ENCODE measurements at regions of chr19 and their contacts with region 1.

Region 1: DNA sequence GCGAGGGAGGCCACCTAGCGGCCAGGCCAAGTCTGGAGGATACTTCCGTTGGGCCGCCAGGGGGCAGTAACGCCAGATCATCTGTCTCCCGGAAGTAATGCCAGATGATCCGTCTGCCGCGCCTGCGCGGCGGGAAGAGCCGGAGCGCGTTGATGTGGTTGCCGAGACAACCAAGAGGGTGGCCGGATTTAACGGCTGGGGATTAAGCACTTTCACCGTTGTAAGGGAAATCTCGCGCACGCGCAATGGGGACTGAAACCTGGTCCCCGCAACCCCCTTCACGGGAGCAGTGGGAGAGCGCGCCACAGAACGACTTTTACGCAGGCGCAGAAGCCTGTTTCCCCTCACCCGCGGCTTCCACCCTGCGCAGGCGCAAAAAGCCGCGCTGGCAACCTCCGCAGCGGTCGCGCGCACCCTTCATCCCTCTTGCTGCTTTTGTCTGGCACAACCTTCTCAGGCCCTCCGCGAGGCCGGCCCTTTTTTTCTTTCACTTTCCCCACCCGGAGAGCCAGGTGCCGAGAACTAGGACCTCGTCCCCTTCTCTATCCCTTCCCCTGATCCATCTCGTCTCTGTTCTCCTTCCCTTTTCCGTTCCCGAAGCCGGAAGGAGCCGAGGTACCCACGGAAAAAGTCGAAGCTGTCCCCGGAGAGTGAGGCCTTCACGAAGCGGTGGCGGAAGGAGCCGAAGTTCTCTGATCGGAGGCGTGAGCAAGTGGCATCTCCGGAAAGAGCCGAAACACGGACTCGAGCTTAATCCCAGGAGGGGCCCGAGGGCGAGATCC is 886 bp upstream of the U2AF2 start:
- DNase-seq: peak; percentile 100
- H3K4me3 Mint-ChIP-seq: peak overlapping the region; percentile 93
- H3K27ac Mint-ChIP-seq: peak overlapping the region; percentile 100
- H3K4me1 Mint-ChIP-seq: peaks cover 28% of the 10 kb centered on the region
- H3K27me3 Mint-ChIP-seq: no peaks in the 10 kb centered on the region

Region 2: GRCh38 chr19:54448774-54449700 is 1204.9 kb before region 1 on chr19 and contains the start of gene LENG8:
- CTCF ChIA-PET with region 1: no interaction called
- POLR2A ChIA-PET with region 1: no interaction called
- intact Hi-C with region 1: loop called (anchors 10 kb)
- DNase-seq: peak; percentile 98
- H3K4me3 Mint-ChIP-seq: peak within 1 kb of the TSS; percentile 99
- H3K27ac Mint-ChIP-seq: peak within 1 kb of the TSS; percentile 99
- H3K4me1 Mint-ChIP-seq: peaks cover 43% of the 10 kb centered on the region
- H3K27me3 Mint-ChIP-seq: peaks cover 2% of the 10 kb centered on the region
- total RNA-seq, gene LENG8: 163 to 176 TPM

Region 3: DNA sequence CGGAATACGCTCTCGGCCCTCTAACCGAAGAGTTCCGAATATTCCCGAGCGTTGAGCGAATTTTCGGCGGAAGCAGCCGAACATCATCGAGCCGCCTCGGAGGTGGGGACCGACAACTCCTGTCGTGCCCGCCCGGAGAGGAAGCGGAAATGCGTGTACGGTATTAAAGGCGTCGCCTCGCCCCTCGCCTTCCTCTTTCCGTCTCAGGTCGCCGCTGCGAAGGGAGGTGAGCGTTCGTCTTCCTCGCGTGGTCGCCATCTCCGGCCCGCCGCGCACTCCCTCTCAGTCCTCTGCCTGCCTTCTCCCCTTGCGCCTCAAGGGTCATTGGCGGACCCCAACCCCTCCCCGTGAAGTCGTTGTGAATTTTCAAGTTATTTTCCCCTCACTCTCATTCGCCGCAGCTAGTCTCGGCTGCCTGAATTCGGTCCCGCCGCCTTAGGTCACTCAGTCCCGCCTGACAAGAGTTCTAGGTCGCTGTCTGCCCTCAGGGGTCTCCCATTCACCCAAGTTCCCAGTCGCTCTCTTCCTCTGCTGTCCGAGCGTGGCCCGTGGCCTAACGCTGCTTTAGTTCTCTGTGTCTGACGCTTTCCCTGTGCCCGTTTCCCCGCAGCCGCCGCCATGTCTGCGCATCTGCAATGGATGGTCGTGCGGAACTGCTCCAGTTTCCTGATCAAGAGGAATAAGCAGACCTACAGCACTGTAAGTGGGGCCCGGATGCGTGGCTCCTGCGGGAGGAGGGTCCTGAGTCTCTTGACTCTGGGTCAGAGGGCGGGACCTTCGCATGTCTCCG is 268.0 kb before region 1 on chr19 and contains the start of gene RPL28:
- CTCF ChIA-PET with region 1: no interaction called
- POLR2A ChIA-PET with region 1: no interaction called
- intact Hi-C with region 1: loop called (anchors 1 kb)
- DNase-seq: peak; percentile 99
- H3K4me3 Mint-ChIP-seq: peak within 1 kb of the TSS; percentile 96
- H3K27ac Mint-ChIP-seq: peak within 1 kb of the TSS; percentile 92
- H3K4me1 Mint-ChIP-seq: peaks cover 59% of the 10 kb centered on the region
- H3K27me3 Mint-ChIP-seq: no peaks in the 10 kb centered on the region
- total RNA-seq, gene RPL28: 2,630 to 2,642 TPM

Region 4: GRCh38 chr19:55605207-55605636 is 48.7 kb before region 1 on chr19:
- CTCF ChIA-PET with region 1: interaction called, 4 read pairs
- POLR2A ChIA-PET with region 1: no interaction called
- intact Hi-C with region 1: loop called (anchors 1 kb)
- DNase-seq: peak; percentile 100
- H3K4me3 Mint-ChIP-seq: peak overlapping the region; percentile 80
- H3K27ac Mint-ChIP-seq: peak overlapping the region; percentile 96
- H3K4me1 Mint-ChIP-seq: peaks cover 49% of the 10 kb centered on the region
- H3K27me3 Mint-ChIP-seq: no peaks in the 10 kb centered on the region

Region 5: GRCh38 chr19:55632463-55632834 is 21.5 kb before region 1 on chr19:
- CTCF ChIA-PET with region 1: interaction called, 31 read pairs
- POLR2A ChIA-PET with region 1: interaction called, 4 read pairs
- intact Hi-C with region 1: loop called (anchors 1 kb)
- DNase-seq: peak; percentile 88
- H3K4me3 Mint-ChIP-seq: no peak overlapping the region
- H3K27ac Mint-ChIP-seq: no peak overlapping the region
- H3K4me1 Mint-ChIP-seq: peaks cover 39% of the 10 kb centered on the region
- H3K27me3 Mint-ChIP-seq: no peaks in the 10 kb centered on the region

Region 6: GRCh38 chr19:55674841-55675660 is 21.1 kb after region 1 on chr19 and contains the start of gene EPN1:
- CTCF ChIA-PET with region 1: interaction called, 23 read pairs
- POLR2A ChIA-PET with region 1: interaction called, 5 read pairs
- intact Hi-C with region 1: loop called (anchors 1 kb)
- DNase-seq: peak; percentile 99
- H3K4me3 Mint-ChIP-seq: peak within 1 kb of the TSS; percentile 90
- H3K27ac Mint-ChIP-seq: peak within 1 kb of the TSS; percentile 86
- H3K4me1 Mint-ChIP-seq: peaks cover 59% of the 10 kb centered on the region
- H3K27me3 Mint-ChIP-seq: no peaks in the 10 kb centered on the region
- total RNA-seq, gene EPN1: 36.0 to 36.1 TPM

Region 7: DNA sequence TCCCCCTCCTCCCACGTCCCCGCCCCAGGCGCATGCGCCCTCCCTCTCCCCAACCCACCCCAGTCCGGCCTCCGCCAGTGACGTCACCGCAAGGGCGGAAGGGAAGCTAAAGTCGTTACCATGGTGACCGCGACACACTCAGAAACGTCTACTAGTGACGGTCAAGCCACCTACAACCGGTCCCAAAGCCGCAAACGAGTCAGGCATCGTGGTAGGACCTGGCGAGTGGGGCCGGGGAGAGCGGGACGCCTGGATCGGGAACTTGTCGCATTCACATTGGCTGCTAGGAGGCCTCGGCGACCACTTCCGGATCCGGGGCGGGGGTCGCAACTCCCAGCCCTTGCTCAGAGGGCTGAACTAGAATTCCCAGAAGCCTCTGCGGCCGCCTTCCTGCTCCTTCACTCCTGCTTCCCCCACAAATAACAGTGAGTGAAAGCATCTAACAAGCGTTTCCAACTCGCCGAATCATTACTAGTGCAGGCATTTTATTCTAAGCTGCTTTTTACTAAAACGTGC is 660.7 kb after region 1 on chr19 and contains the start of gene ZSCAN5A:
- CTCF ChIA-PET with region 1: no interaction called
- POLR2A ChIA-PET with region 1: no interaction called
- intact Hi-C with region 1: loop called (anchors 10 kb)
- DNase-seq: peak; percentile 98
- H3K4me3 Mint-ChIP-seq: peak within 1 kb of the TSS; percentile 91
- H3K27ac Mint-ChIP-seq: peak within 1 kb of the TSS; percentile 97
- H3K4me1 Mint-ChIP-seq: peaks cover 23% of the 10 kb centered on the region
- H3K27me3 Mint-ChIP-seq: no peaks in the 10 kb centered on the region
- total RNA-seq, gene ZSCAN5A: 4.5 to 5.2 TPM

Measured in activated CD4-positive, alpha-beta memory T cell treated with anti-CD3 and anti-CD28 coated beads for 36 hours (primary cell).